Heart left ventricle (tissue), 16 donors: ENCODE measurements at regions of chr1 and their contacts with region 1.

Region 1: DNA sequence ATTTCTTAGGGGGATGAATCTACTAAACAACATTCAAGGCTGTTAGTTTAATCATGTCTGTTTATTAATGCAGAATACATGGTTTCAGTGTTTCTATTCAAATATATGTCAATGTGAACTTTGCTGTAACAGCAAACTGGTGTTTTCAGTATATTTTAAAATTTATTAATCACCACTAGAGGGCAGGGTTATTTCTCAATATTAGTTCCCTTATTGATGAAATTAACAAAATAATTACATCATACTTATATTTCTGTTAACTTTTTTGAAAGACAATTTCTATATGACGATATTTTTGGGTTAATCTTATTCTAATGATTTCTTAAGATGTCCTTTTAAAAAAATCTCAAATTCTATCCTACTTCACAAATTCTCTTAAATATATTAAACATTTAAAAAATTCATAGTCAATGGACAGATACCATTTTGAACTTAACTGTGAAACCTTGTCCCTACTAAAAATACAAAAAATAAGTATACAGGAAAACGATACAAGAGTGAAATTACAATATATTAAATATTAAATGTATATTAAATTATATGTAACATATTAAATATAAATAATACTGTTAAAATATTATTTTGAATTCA is 1034.1 kb upstream of the PRMT6 start:
- DNase-seq: no peak
- ATAC-seq: no peak
- H3K4me3 ChIP-seq: no peak overlapping the region
- H3K27ac ChIP-seq: no peak overlapping the region
- H3K4me1 ChIP-seq: no peaks in the 10 kb centered on the region
- H3K27me3 ChIP-seq: no peaks in the 10 kb centered on the region
- CTCF ChIP-seq: peak in 11 of 12 donors; percentile 15 to 53 (median 31)
- POLR2A ChIP-seq: no peak

Region 2: DNA sequence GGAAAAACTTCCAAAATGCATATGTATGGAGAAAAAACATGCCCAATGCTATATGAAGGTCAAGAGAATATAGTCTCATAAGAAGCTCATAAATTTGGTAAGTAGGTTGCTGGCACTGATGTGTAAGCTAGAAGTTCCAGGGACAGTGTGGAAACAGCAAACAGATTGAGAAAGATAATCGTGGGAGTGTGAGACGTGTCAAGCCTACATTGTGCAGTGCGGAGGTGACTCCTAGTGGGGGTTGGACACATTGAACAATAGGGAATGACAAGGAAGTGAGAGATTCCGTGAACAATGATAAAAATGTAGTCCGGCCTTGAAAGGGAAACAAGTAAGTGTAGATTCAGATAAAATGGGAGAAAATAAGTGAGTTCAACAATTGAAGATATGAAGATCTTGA is 245.6 kb after region 1 on chr1:
- intact Hi-C with region 1: loop called in 2 of 10 experiments (anchors 5 kb)
- DNase-seq: no peak
- ATAC-seq: no peak
- H3K4me3 ChIP-seq: no peak overlapping the region
- H3K27ac ChIP-seq: no peak overlapping the region
- H3K4me1 ChIP-seq: no peaks in the 10 kb centered on the region
- H3K27me3 ChIP-seq: no peaks in the 10 kb centered on the region
- CTCF ChIP-seq: peak in 5 of 12 donors; percentile 13 to 27 (median 16)
- POLR2A ChIP-seq: no peak

Region 3: GRCh38 chr1:107142140-107142542 is 1119.7 kb after region 1 on chr1:
- intact Hi-C with region 1: loop called in 1 of 10 experiments (anchors 10 kb)
- DNase-seq: no peak
- ATAC-seq: no peak
- H3K4me3 ChIP-seq: peak overlapping the region in 10 of 12 donors; percentile 30 to 60 (median 52)
- H3K27ac ChIP-seq: peak overlapping the region in 1 of 12 donors; percentile 50
- H3K4me1 ChIP-seq: peaks cover 0 to 26% (median 10%) of the 10 kb centered on the region in 12 donors
- H3K27me3 ChIP-seq: peaks cover 12 to 78% (median 28%) of the 10 kb centered on the region in 9 donors
- CTCF ChIP-seq: peak; percentile 46 to 73 (median 64)
- POLR2A ChIP-seq: no peak